ENCODE measurements at regions of chr4 and their contacts with region 1.

Region 1: GRCh38 chr4:112327965-112328733 is 31.0 kb downstream of the ALPK1 start:
- DNase-seq: peak; percentile 57
- CTCF ChIP-seq: peak; percentile 49

Region 2: DNA sequence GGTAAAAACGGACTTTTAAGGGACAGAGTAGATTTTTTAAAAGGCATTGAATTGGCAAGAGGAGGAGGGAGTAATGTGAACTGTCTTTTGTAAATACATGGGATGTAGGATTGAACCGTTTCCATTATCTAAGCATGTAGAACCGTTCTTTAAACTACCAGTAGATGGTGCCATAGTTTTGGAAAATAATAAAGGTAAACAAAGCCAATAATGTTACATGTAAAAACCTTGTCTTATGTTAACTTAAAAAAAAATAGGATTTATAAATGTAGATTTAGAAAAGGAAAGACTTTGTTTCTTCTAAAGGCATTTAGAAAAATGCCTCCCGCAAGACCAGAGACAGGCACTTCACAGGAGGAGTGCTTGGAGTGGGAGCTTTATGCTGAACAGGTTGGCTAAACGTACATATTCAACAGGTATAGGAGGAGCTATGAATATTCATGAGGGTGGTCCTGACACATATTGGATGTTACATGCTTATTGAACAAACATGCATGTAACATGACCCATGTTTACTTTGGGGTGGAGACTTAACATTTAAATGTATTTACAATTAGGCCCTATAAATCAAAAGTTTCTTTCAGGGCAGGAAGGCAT is 228.3 kb before region 1 on chr4:
- CTCF ChIA-PET with region 1: interaction called, 25 read pairs
- POLR2A ChIA-PET with region 1: no interaction called
- DNase-seq: peak; percentile 51
- CTCF ChIP-seq: peak; percentile 64

Region 3: GRCh38 chr4:112340027-112340426 is 11.9 kb after region 1 on chr4:
- CTCF ChIA-PET with region 1: interaction called, 15 read pairs
- POLR2A ChIA-PET with region 1: no interaction called
- DNase-seq: no peak
- CTCF ChIP-seq: no peak

Region 4: GRCh38 chr4:112515304-112516067 is 187.3 kb after region 1 on chr4:
- CTCF ChIA-PET with region 1: interaction called, 156 read pairs
- POLR2A ChIA-PET with region 1: no interaction called
- DNase-seq: peak; percentile 69
- CTCF ChIP-seq: no peak

Region 5: DNA sequence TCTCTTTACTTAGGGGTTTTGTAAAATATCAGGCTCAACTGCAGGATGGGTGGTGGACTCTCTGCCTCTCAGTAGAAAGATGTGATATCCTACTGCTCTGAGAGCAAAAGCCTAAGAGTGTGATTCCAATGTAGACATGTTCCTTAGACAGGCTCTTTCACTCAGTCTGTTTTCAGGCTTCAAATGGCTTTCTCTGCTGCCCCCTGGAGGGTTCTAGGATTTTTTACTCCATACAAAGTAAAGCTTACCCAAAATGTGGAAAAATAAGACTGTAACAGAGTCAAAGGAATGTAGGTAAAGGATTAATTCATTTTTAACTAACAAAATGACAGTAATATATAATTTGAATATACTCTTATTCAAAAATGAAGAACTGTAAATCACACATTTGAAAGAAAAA is 276.4 kb after region 1 on chr4:
- CTCF ChIA-PET with region 1: interaction called, 39 read pairs
- POLR2A ChIA-PET with region 1: no interaction called
- DNase-seq: peak; percentile 55
- CTCF ChIP-seq: peak; percentile 57